CD4-positive, alpha-beta T cell (primary cell): ENCODE measurements at regions of chr1 and their contacts with region 1.

Region 1: DNA sequence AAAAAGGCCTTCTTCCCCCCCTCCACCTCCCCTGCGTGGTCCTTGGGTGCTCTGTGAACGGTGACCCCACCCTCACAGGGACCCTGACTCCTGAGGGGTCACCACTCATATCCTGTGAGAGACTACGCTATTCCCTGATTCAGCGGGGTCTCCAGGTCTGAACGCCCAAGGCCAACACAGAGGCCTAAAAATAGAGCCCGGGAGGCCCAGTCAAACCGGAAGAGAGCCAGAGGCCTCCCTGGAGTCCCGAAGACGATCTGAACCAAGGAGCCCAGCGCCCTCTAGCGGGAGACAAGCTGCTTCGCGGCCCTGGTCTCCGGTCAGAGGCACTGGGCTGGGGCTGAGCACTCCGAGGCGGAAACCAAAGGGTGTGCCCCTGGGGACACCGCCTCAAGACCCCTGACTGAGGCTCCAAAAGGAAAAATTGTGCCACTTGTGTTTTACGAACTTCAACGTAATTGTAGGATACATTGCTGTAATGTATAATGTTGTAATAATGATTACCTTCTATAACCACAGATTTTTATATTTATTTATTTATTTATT is 42.4 kb upstream of the PSEN2 start:
- DNase-seq: peak; percentile 89 to 98 (median 94)
- ATAC-seq: peak; percentile 98
- H3K4me3 ChIP-seq: peak overlapping the region; percentile 28
- H3K4me3 Mint-ChIP-seq: peak overlapping the region; percentile 60
- H3K27ac ChIP-seq: no peak overlapping the region
- H3K27ac Mint-ChIP-seq: peak overlapping the region; percentile 75
- H3K4me1 ChIP-seq: peaks cover 23% of the 10 kb centered on the region
- H3K4me1 Mint-ChIP-seq: peaks cover 43% of the 10 kb centered on the region
- H3K27me3 ChIP-seq: no peaks in the 10 kb centered on the region
- H3K27me3 Mint-ChIP-seq: no peaks in the 10 kb centered on the region
- CTCF ChIP-seq: peak; percentile 91

Region 2: DNA sequence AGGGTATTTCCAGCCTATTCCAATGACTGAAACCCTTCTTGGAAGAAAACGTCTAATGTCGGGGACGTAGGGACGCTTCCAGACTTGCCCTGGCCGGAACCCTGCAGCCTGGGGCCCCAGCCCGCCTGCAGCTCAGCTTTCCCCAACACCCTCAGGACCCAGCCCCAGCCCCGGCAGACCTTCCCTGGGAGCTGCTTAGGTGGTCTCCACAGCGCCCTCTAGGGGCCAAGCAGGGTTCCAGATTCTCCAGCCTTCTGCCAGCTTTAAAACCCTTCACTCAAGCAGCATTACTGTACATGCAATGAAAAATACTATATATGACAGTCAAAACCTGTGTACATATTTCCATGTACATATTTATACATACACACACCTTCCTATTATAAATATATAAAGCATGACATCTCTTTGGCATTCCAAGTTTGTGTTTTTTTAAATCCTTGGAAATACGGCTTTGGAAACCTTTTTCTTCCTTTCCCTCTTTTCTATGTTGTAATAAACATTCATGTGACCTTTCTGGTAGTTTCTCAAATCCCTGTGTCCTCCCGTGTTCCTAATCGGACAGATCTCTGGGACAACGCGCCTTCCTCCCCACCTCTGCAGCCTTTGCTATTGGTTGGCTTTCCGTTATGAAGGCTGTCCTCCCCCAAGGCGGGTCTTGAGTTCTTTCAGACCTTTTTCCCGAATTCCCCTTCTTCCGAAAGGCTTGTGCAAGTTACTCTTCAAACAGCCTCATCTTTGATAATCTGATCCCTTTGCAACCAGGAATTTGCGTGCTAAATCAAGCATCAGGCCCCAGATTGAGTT is 219.1 kb before region 1 on chr1:
- CTCF ChIA-PET with region 1: interaction called, 11 read pairs
- POLR2A ChIA-PET with region 1: no interaction called
- intact Hi-C with region 1: no loop called
- DNase-seq: peak; percentile 45 to 84 (median 62)
- ATAC-seq: peak; percentile 80
- H3K4me3 ChIP-seq: no peak overlapping the region
- H3K4me3 Mint-ChIP-seq: no peak overlapping the region
- H3K27ac ChIP-seq: no peak overlapping the region
- H3K27ac Mint-ChIP-seq: no peak overlapping the region
- H3K4me1 ChIP-seq: peaks cover 4% of the 10 kb centered on the region
- H3K4me1 Mint-ChIP-seq: no peaks in the 10 kb centered on the region
- H3K27me3 ChIP-seq: no peaks in the 10 kb centered on the region
- H3K27me3 Mint-ChIP-seq: no peaks in the 10 kb centered on the region
- CTCF ChIP-seq: peak; percentile 93

Region 3: DNA sequence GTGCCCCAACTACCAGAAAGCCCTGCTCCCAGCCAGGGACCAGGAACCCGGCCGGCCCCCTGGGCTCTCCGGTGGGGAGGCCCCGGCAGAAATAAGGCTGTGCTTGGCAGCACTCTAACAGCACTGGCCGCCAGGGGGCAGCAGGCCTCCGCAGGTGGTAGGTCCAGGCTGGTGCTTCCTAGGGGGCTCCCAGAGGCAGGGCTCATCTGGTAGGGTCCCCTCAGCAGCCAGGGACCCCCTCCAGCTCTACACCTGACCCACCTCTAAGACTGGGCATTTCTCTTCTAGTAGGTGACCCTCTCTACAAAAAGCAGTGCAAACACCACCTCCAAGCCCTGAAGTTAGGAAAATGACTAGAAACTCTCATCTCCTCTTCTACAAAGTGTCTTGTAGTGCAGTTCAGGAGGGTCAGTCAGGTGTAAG is 193.9 kb before region 1 on chr1:
- CTCF ChIA-PET with region 1: interaction called, 8 read pairs
- POLR2A ChIA-PET with region 1: interaction called, 15 read pairs
- intact Hi-C with region 1: loop called (anchors 1 kb)
- DNase-seq: peak; percentile 72 to 90 (median 78)
- ATAC-seq: peak; percentile 71
- H3K4me3 ChIP-seq: no peak overlapping the region
- H3K4me3 Mint-ChIP-seq: peak overlapping the region; percentile 52
- H3K27ac ChIP-seq: peak overlapping the region; percentile 22 to 54
- H3K27ac Mint-ChIP-seq: peak overlapping the region; percentile 87
- H3K4me1 ChIP-seq: peaks cover 55% of the 10 kb centered on the region
- H3K4me1 Mint-ChIP-seq: peaks cover 61% of the 10 kb centered on the region
- H3K27me3 ChIP-seq: no peaks in the 10 kb centered on the region
- H3K27me3 Mint-ChIP-seq: no peaks in the 10 kb centered on the region
- CTCF ChIP-seq: peak; percentile 95

Region 4: GRCh38 chr1:226702957-226703831 is 124.8 kb before region 1 on chr1:
- CTCF ChIA-PET with region 1: interaction called, 3 read pairs
- POLR2A ChIA-PET with region 1: interaction called, 3 read pairs
- intact Hi-C with region 1: loop called in 1 of 2 experiments (anchors 10 kb)
- DNase-seq: peak; percentile 56 to 94 (median 75)
- ATAC-seq: peak; percentile 71
- H3K4me3 ChIP-seq: peak overlapping the region; percentile 65
- H3K4me3 Mint-ChIP-seq: peak overlapping the region; percentile 84
- H3K27ac ChIP-seq: peak overlapping the region; percentile 71 to 95
- H3K27ac Mint-ChIP-seq: peak overlapping the region; percentile 95
- H3K4me1 ChIP-seq: peaks cover 74% of the 10 kb centered on the region
- H3K4me1 Mint-ChIP-seq: peaks cover 91% of the 10 kb centered on the region
- H3K27me3 ChIP-seq: no peaks in the 10 kb centered on the region
- H3K27me3 Mint-ChIP-seq: no peaks in the 10 kb centered on the region
- CTCF ChIP-seq: no peak